ENCODE measurements at regions of chr17 and their contacts with region 1.

Region 1: GRCh38 chr17:74379495-74380085 is 12.3 kb downstream of the GPR142 start:
- DNase-seq: peak; percentile 94
- ATAC-seq: peak; percentile 94
- H3K4me3 Mint-ChIP-seq: no peak overlapping the region
- H3K27ac Mint-ChIP-seq: no peak overlapping the region
- H3K4me1 Mint-ChIP-seq: peaks cover 10% of the 10 kb centered on the region
- H3K27me3 Mint-ChIP-seq: peaks cover 15% of the 10 kb centered on the region

Region 2: GRCh38 chr17:74361230-74362068 is 18.1 kb before region 1 on chr17 and contains the start of gene BTBD17:
- CTCF ChIA-PET with region 1: interaction called, 12 read pairs
- DNase-seq: peak; percentile 61
- ATAC-seq: peak; percentile 69
- H3K4me3 Mint-ChIP-seq: no peak within 1 kb of the TSS
- H3K27ac Mint-ChIP-seq: no peak within 1 kb of the TSS
- H3K4me1 Mint-ChIP-seq: peaks cover 3% of the 10 kb centered on the region
- H3K27me3 Mint-ChIP-seq: peaks cover 32% of the 10 kb centered on the region
- total RNA-seq, gene BTBD17: not detected

Region 3: GRCh38 chr17:74393346-74393942 is 13.9 kb after region 1 on chr17:
- CTCF ChIA-PET with region 1: interaction called, 23 read pairs
- DNase-seq: no peak
- ATAC-seq: no peak
- H3K4me3 Mint-ChIP-seq: no peak overlapping the region
- H3K27ac Mint-ChIP-seq: no peak overlapping the region
- H3K4me1 Mint-ChIP-seq: no peaks in the 10 kb centered on the region
- H3K27me3 Mint-ChIP-seq: peaks cover 17% of the 10 kb centered on the region

Region 4: DNA sequence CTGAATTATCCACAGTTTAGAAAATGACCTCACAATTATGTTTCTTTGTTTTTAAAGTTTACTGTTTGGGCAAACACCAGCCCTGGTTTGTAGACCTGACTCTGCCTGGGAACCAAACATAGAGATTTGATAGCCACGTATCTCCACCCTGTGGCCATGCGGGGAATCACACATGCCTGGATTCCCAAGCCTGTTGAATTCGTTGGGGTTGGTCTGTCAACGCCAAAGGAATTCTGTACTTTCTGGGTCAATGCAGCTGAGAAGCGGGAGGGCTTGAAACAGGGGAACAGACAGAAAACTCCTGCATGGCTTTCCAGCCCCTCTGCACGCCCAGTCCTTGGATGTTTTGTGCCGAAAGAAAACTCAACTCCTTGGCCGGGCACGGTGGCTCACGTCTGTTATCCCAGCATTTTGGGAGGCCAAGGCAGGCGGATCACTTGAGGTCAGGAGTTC is 113.8 kb after region 1 on chr17:
- CTCF ChIA-PET with region 1: interaction called, 74 read pairs
- DNase-seq: peak; percentile 76
- ATAC-seq: peak; percentile 78
- H3K4me3 Mint-ChIP-seq: no peak overlapping the region
- H3K27ac Mint-ChIP-seq: no peak overlapping the region
- H3K4me1 Mint-ChIP-seq: peaks cover 22% of the 10 kb centered on the region
- H3K27me3 Mint-ChIP-seq: peaks cover 6% of the 10 kb centered on the region

Region 5: DNA sequence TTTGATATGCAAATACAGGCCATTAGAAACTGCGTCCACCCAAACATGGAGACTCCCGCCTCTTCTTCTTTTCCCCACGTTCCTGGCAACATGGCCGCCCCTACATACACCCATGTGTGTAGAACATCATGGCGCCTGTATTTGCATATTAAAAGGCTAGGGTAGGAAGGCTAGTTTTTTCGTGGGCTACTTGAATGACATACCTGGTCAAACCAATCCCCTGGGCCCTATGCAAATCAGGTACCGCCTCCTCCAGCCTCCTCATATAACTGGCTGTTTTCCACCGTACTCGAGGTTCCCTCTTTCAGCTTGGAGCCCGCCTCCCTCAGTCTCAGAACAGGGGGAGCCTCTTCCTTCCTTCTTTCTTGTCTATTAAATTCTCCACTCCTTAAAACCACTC is 152.5 kb after region 1 on chr17:
- CTCF ChIA-PET with region 1: interaction called, 11 read pairs
- DNase-seq: peak; percentile 35
- ATAC-seq: no peak
- H3K4me3 Mint-ChIP-seq: no peak overlapping the region
- H3K27ac Mint-ChIP-seq: no peak overlapping the region
- H3K4me1 Mint-ChIP-seq: peaks cover 3% of the 10 kb centered on the region
- H3K27me3 Mint-ChIP-seq: peaks cover 57% of the 10 kb centered on the region